ENCODE measurements at regions of chr1 and their contacts with region 1.

Region 1: GRCh38 chr1:180178511-180179161 is 24.0 kb downstream of the QSOX1 start:
- DNase-seq: peak; percentile 55 to 85 (median 82)
- ATAC-seq: peak in 1 of 2 donors; percentile 12
- H3K4me3 ChIP-seq: no peak overlapping the region
- H3K27ac ChIP-seq: no peak overlapping the region
- H3K4me1 ChIP-seq: peaks cover 15% of the 10 kb centered on the region
- H3K27me3 ChIP-seq: no peaks in the 10 kb centered on the region

Region 2: DNA sequence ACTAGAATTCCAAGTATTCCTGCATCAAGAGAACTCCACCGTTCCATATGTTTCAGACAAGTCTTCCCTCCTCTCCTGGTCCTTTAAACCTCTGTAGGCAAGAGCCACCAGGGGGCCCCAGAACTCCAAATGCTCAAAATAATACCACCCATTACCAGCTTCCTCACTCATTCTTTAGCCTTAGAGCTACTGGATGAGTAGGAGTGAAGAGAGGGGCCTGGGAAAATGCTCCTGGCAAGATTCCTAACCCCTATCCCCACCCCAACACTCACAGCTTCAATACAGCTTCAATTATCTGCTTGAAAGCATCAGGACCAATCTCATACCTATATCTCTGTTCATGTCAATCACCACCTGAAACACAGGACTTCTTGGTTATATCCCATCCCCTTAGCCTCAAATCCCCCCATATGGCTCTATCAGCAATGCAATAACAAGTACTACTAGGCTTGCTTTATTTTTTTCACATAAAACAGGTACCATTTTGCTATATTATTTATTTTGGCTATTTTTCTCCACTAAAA is 310.8 kb before region 1 on chr1:
- intact Hi-C with region 1: loop called in 2 of 4 experiments (anchors 10 kb)
- DNase-seq: peak in 1 of 3 donors; percentile 73
- ATAC-seq: peak; percentile 73 to 75
- H3K4me3 ChIP-seq: no peak overlapping the region
- H3K27ac ChIP-seq: no peak overlapping the region
- H3K4me1 ChIP-seq: no peaks in the 10 kb centered on the region
- H3K27me3 ChIP-seq: no peaks in the 10 kb centered on the region

Region 3: DNA sequence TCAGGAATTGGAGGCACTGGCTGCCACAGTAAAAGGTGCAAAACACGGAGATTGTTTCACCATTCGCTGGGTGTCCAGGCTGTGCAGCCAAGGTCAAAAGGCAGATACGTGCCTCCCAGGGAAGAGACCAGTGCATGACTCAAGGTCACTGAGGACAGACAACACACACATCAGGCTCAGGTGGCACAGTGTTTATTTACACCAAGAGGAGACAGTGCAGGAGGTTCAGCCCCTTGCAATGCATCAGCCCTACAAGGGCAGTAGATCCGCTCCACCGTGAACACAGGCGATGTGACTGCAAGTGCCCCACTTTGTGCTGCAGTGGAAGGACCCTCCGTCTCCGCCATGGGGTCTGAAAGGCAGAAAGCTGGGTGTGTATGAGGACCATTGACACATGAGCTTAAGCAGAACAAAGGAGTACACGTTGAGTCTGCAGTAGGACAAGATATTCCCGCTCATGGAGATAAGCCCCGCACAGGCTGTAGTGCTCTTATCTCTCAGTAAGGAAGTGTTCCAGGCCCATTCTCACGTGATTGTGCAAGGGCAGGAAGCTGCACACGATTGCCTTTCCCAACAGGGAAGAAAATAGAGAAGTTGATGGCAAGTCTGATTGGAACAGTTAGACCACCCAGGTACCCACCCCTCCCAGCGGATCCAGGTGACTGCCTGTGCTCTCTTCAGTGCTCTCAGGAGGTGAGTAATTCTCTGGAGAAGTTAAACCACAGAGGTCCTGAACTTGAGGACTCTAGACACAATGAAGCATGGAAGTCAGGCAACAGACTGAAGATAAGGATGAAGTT is 61.5 kb before region 1 on chr1:
- intact Hi-C with region 1: loop called in 3 of 4 experiments (anchors 5 to 10 kb)
- DNase-seq: peak in 2 of 3 donors; percentile 44 to 69
- ATAC-seq: peak; percentile 85 to 88
- H3K4me3 ChIP-seq: no peak overlapping the region
- H3K27ac ChIP-seq: peak overlapping the region; percentile 71
- H3K4me1 ChIP-seq: peaks cover 13% of the 10 kb centered on the region
- H3K27me3 ChIP-seq: no peaks in the 10 kb centered on the region

Measured in right cardiac atrium (tissue), 5 donors.